Gastrocnemius medialis (tissue), 4 donors: ENCODE measurements at regions of chr19 and their contacts with region 1.

Region 1: DNA sequence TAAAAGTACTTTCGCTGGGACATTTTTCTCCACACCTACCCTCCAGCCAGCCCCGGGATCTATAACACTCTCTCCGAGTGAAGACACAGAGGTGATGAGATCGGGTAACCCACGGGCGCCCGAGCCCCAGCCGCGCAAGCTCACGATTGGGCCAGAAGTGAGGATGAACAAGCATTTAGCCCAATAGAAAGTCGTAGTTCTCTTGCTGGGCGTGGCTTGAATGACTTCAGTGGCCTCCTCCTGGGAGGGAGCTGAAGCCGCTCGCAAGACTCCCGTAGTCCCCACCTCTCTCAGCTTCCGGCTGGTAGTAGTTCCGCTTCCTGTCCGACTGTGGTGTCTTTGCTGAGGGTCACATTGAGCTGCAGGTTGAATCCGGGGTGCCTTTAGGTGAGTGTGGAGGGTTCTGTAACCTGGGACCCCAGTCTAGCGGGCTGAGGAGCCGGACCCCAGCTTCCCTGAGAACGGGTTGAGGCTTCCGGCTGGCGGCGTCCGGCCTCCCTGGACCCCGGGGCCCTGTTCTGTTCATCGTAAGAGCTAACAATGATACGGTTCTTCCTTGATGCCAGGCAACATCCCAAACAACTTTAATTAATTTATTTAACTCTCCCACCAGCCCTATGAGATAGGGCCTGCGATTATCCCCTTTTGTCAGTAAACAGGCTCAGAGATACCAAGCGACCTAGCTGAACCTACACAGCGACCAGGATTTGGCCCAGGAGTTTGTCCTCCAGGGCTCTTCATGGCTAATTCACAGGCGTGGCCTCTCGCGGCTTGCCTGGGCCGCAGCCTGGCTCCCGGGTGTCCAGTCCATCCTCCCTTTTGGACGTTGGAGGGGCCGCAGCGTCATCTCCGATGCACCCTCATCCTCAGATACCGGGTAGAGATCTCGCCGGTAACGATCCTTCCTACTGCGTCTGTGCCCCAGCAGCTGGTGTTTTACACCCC is at the start of gene COX6B1:
- DNase-seq: peak; percentile 97 to 98
- ATAC-seq: peak; percentile 94
- H3K4me3 ChIP-seq: peak within 1 kb of the TSS; percentile 74 to 98 (median 90)
- H3K27ac ChIP-seq: peak within 1 kb of the TSS; percentile 92 to 98 (median 94)
- H3K4me1 ChIP-seq: peaks cover 23 to 32% of the 10 kb centered on the region in 2 donors
- H3K27me3 ChIP-seq: no peaks in the 10 kb centered on the region
- CTCF ChIP-seq: no peak
- POLR2A ChIP-seq: peak; percentile 76 to 85
- total RNA-seq, gene COX6B1: 899 to 1,245 (median 976) TPM

Region 2: DNA sequence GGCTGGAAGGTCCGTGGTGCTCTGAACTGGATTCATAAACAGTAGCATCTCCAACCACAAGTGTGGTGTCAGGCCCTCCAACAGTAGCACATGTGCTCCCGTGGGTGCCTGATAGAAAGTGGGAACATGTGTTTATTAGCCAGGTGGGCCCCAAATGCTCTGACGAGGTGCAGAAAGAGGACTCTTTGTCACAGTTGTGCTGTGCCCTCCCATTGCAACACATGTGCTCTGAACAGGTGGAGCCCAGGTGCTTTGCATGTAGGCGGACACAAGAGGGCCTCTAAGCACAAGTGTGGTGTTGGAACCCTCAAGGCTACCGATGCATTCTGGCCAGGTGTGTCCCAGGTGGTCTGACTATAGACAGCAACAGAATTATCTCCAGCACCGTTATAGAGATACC is 796.9 kb before region 1 on chr19:
- in situ Hi-C with region 1: no loop called
- intact Hi-C with region 1: no loop called
- DNase-seq: no peak
- ATAC-seq: no peak
- H3K4me3 ChIP-seq: no peak overlapping the region
- H3K27ac ChIP-seq: no peak overlapping the region
- H3K4me1 ChIP-seq: no peaks in the 10 kb centered on the region
- H3K27me3 ChIP-seq: peaks cover 0 to 3% (median 0%) of the 10 kb centered on the region in 3 donors
- CTCF ChIP-seq: no peak
- POLR2A ChIP-seq: no peak

Region 3: GRCh38 chr19:35545001-35545911 is 103.0 kb before region 1 on chr19 and contains the start of gene TMEM147:
- in situ Hi-C with region 1: no loop called
- intact Hi-C with region 1: loop called (anchors 2 kb)
- DNase-seq: peak; percentile 87
- ATAC-seq: peak; percentile 91 to 92
- H3K4me3 ChIP-seq: peak within 1 kb of the TSS; percentile 71 to 90 (median 80)
- H3K27ac ChIP-seq: peak within 1 kb of the TSS; percentile 80 to 89 (median 87)
- H3K4me1 ChIP-seq: peaks cover 18 to 25% of the 10 kb centered on the region in 2 donors
- H3K27me3 ChIP-seq: no peaks in the 10 kb centered on the region
- CTCF ChIP-seq: no peak
- POLR2A ChIP-seq: peak; percentile 63 to 70
- total RNA-seq, gene TMEM147: 86.2 to 145 (median 119) TPM

Region 4: GRCh38 chr19:35612559-35613321 is 35.5 kb before region 1 on chr19 and contains the start of gene HAUS5:
- in situ Hi-C with region 1: no loop called
- intact Hi-C with region 1: loop called (anchors 1 kb)
- DNase-seq: peak; percentile 82 to 92
- ATAC-seq: peak; percentile 97 to 99
- H3K4me3 ChIP-seq: peak within 1 kb of the TSS; percentile 78 to 90 (median 86)
- H3K27ac ChIP-seq: peak within 1 kb of the TSS; percentile 67 to 75 (median 72)
- H3K4me1 ChIP-seq: peaks cover 5 to 15% of the 10 kb centered on the region in 2 donors
- H3K27me3 ChIP-seq: no peaks in the 10 kb centered on the region
- CTCF ChIP-seq: peak in 2 of 5 experiments; percentile 16 to 43
- POLR2A ChIP-seq: no peak
- total RNA-seq, gene HAUS5: 2.5 to 4.8 (median 3.4) TPM

Region 5: DNA sequence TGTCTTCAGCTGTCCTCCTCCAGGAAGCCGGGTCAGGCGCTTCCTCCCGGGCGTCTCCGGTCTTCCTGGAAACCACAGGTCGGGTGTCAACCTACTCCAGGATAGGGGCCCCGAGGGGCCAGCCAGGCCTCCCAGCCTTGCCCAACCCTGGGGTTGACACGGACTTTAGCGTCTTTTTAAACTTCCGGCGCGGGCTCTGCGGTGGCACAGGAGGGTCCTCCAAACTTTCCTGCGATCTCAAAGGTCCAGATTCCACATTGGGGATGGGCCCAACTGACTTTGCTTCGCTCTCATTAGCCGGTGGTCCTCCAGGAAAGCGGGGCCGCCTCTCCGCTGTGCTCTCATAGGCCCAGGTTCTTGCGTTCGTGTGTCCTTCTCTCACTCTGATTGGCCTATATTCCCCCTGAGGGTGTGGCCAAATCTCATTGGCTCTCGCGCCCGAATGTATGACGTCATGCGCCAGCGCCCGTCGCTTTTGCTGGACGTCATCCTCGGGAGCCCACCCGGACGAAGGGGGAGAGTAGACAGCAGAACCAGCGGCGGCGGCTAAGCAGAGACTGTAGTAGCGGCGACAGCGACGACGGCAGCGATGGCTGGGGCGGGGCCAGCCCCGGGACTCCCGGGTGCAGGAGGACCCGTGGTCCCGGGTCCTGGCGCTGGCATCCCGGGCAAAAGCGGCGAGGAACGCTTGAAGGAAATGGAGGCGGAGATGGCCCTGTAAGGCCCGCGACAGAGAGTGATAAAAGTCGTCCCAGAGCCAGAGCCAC is 19.5 kb before region 1 on chr19 and contains the start of gene RBM42:
- in situ Hi-C with region 1: no loop called
- intact Hi-C with region 1: loop called (anchors 1 kb)
- DNase-seq: peak; percentile 97 to 98
- ATAC-seq: peak; percentile 99 to 100
- H3K4me3 ChIP-seq: peak within 1 kb of the TSS; percentile 68 to 100 (median 96)
- H3K27ac ChIP-seq: peak within 1 kb of the TSS; percentile 89 to 95 (median 94)
- H3K4me1 ChIP-seq: peaks cover 8 to 23% of the 10 kb centered on the region in 2 donors
- H3K27me3 ChIP-seq: no peaks in the 10 kb centered on the region
- CTCF ChIP-seq: peak in 2 of 5 experiments; percentile 51 to 67
- POLR2A ChIP-seq: peak; percentile 71
- total RNA-seq, gene RBM42: 45.8 to 77.8 (median 75.4) TPM

Region 6: DNA sequence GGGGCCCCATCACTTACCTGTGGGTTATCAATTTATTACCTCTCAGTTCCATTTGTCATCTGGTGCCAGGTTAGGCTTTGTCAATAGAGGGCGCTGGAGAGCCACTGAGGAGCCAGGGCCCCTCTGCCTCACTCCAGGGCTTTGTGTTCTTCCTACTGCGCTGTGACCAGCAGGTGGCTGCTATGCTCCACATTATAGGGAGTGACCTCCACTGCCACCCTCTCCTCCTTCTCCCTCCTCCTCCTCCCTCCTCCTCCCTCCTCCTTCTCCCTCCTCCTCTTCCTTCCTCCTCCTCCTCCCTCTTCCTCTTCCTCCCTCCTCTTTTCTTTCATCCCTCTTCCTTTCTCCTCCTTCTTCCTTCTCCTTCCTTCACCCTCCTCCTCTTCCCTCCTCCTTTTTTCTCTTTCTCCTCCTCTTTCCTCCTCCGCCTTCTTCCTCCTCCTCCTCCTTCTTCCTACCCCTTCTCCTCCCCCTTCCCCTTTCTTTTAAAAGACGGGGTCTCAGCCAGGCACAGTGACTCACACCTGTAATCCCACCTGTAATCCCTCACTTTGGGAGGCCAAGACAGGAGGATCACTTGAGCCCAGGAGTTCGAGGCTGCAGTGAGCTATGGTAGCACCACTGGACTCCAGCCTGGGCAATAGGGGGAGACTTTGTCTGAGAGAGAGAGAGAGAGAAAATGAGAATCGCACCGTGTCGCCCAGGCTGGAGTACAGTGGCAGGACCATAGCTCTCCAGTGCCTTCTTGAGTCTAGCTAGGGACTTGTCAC is 45.7 kb after region 1 on chr19:
- in situ Hi-C with region 1: no loop called
- intact Hi-C with region 1: loop called (anchors 2 kb)
- DNase-seq: peak; percentile 71 to 86
- ATAC-seq: peak; percentile 100
- H3K4me3 ChIP-seq: no peak overlapping the region
- H3K27ac ChIP-seq: no peak overlapping the region
- H3K4me1 ChIP-seq: no peaks in the 10 kb centered on the region
- H3K27me3 ChIP-seq: peaks cover 0 to 2% (median 0%) of the 10 kb centered on the region in 3 donors
- CTCF ChIP-seq: peak; percentile 94 to 98 (median 97)
- POLR2A ChIP-seq: no peak